Activated B cell treated with CpG ODN at 0.5 μM for 24 hours (primary cell): ENCODE measurements at regions of chr7 and their contacts with region 1.

Region 1: DNA sequence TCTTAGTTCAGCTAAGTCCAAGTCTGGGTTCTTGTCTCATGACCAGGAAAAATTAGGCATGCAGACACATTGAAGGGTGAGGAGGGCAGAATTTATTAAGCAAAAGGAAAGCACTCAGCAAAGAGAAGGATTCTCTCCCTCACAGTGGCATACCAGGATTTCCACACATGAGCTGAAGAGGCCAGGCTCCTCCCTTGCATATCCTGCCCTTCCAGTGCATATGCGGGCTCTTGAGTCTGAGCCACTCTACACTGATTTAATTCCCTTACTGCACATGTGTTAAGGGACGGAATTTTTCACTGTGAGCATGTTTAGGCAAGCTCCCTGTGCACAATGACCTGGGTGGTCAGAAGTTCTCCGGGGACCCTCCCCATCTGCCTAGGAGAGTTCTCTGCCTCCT is 652.7 kb upstream of the POM121L12 start:
- DNase-seq: no peak
- ATAC-seq: no peak
- H3K4me3 Mint-ChIP-seq: no peak overlapping the region
- H3K27ac Mint-ChIP-seq: no peak overlapping the region
- H3K4me1 Mint-ChIP-seq: no peaks in the 10 kb centered on the region
- H3K27me3 Mint-ChIP-seq: no peaks in the 10 kb centered on the region
- CTCF ChIP-seq: no peak

Region 2: DNA sequence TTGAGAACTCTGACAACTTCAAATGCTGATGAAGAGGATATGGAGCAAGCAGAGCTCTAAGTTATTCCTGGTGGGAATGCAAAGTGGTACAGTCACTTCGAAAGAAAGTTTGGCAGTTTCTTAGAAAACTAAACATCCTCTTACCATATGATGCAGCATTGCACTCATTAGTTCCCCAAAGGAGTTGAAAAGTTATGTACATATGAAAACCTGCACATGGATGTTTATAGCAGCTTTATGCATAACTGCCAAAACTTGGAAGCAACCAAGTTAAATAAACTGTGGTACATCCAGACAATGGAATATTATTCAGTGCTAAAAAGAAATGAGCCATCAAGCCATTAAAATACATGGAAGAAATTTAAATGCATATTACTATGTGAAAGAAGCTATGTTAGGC is 286.9 kb before region 1 on chr7:
- CTCF ChIA-PET with region 1: no interaction called
- POLR2A ChIA-PET with region 1: no interaction called
- intact Hi-C with region 1: no loop called
- DNase-seq: no peak
- ATAC-seq: no peak
- H3K4me3 Mint-ChIP-seq: no peak overlapping the region
- H3K27ac Mint-ChIP-seq: no peak overlapping the region
- H3K4me1 Mint-ChIP-seq: no peaks in the 10 kb centered on the region
- H3K27me3 Mint-ChIP-seq: no peaks in the 10 kb centered on the region
- CTCF ChIP-seq: no peak

Region 3: DNA sequence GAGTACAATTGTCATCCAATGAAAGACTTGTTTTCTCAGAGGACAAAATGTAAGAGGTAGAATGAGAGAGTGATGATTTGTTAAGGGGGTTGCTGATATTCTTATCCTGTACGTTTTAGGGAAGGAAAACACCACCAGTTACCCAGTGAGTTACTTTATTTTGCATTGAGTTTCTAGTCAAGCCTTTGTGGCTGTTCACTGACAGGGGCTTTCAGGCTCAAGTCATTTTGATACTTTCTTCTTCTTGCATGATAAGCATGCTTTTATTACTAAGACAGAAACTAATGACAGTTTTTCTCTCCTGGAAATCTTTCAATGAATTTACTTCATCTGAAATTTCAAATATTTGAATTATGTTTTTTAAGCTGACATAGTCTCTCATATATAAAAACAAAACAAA is 57.5 kb before region 1 on chr7:
- CTCF ChIA-PET with region 1: no interaction called
- POLR2A ChIA-PET with region 1: no interaction called
- intact Hi-C with region 1: loop called (anchors 10 kb)
- DNase-seq: no peak
- ATAC-seq: no peak
- H3K4me3 Mint-ChIP-seq: no peak overlapping the region
- H3K27ac Mint-ChIP-seq: no peak overlapping the region
- H3K4me1 Mint-ChIP-seq: no peaks in the 10 kb centered on the region
- H3K27me3 Mint-ChIP-seq: no peaks in the 10 kb centered on the region
- CTCF ChIP-seq: no peak